ENCODE measurements at regions of chr22 and their contacts with region 1.

Region 1: DNA sequence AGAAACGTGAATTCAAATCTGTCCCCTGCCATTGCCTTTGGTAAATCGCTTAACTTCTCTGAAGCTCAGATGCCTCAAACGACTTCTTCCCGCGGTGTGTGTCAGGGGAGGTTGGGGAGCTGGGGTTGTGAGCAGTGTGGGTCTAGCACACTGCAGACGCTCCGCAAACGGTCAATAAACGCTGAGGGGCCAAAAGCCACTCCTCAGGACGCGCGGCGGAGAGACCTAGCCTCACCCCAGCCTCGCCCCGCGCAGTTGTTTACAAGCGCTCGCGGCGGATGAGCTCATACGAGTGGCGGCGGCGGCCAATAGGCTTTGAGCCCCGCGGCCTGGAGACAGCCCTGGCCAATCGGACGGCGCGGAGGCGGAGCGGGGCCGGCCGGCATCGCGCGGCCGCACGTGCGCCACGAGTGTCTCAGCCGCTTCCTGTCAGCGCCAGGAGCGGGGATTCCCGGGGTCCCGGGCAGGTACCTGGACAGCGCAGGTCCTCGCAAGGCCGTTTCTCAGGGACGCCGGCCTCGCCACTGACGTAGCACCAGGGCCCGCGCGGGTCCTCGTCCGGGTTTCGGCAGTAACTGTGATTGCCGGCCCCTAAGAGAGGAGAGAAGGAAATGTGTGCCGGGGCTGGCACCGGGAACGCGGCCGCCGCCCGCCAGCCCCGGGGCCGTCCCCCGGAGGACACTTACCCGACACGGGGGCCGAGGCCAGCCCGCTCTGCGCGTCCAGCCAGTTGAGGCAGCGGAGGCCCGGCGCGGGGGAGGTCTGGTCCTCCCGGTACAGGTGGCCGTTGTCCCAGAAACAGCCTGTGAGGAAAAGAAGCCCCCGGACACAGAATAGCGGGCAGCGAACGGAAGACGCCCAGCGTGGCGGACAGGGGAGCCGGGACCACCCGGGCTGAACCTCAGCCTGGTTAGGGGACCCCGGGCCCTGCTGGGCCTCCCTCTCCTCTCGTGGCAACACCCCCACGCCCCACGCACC is 1.5 kb downstream of the PIK3IP1 start:
- DNase-seq: peak; percentile 97
- ATAC-seq: peak; percentile 88
- H3K4me3 ChIP-seq: peak overlapping the region; percentile 72 to 99 (median 95)
- H3K4me3 Mint-ChIP-seq: peak overlapping the region; percentile 97
- H3K27ac ChIP-seq: peak overlapping the region; percentile 99 to 100
- H3K27ac Mint-ChIP-seq: peak overlapping the region; percentile 100
- H3K4me1 ChIP-seq: peaks cover 68 to 76% of the 10 kb centered on the region in 2 donors
- H3K4me1 Mint-ChIP-seq: peaks cover 67% of the 10 kb centered on the region
- H3K27me3 ChIP-seq: no peaks in the 10 kb centered on the region
- H3K27me3 Mint-ChIP-seq: no peaks in the 10 kb centered on the region
- CTCF ChIP-seq: no peak

Region 2: GRCh38 chr22:30591588-30592359 is 699.0 kb before region 1 on chr22 and contains the start of gene PES1:
- CTCF ChIA-PET with region 1: no interaction called
- POLR2A ChIA-PET with region 1: no interaction called
- intact Hi-C with region 1: loop called (anchors 5 kb)
- DNase-seq: peak; percentile 99
- ATAC-seq: peak; percentile 94
- H3K4me3 ChIP-seq: peak within 1 kb of the TSS; percentile 81 to 95 (median 91)
- H3K4me3 Mint-ChIP-seq: no peak within 1 kb of the TSS
- H3K27ac ChIP-seq: peak within 1 kb of the TSS; percentile 95 to 98
- H3K27ac Mint-ChIP-seq: no peak within 1 kb of the TSS
- H3K4me1 ChIP-seq: peaks cover 14 to 22% of the 10 kb centered on the region in 2 donors
- H3K4me1 Mint-ChIP-seq: no peaks in the 10 kb centered on the region
- H3K27me3 ChIP-seq: peaks cover 0 to 2% (median under 1%) of the 10 kb centered on the region in 4 experiments
- H3K27me3 Mint-ChIP-seq: peaks cover 3% of the 10 kb centered on the region
- CTCF ChIP-seq: no peak
- total RNA-seq, gene PES1: 72.7 and 75.2 TPM in 2 replicates

Region 3: DNA sequence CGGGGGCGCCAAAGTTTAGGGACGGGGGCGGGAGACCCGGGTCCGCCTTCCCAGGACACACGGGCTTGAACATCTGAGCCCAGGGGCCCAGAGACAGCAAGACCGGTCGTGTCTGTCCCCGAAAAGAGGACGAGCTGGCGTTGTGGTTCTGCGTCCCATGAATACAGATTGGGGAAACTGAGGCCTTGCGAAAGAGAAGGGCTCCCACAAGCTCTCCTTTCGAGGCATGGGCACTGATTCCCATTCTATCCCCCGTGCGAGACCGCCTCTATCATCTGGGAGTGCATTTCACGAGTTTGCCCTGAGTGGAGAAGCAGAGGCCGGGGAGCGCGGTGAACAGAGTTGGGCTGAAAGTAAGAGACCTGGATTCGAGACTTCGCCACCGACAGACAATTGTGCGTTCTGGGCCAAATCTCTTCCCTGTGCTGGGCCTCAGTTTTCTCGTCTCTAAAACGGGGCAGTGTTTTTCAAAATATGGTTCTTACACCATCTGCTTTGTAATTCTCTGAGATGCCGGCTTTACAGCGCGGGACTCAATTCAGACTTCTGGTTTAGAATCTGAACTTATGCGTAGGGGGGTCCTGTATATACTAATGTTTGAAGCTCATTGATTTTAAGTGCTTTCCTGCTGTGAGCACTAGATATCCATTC is 130.3 kb before region 1 on chr22:
- CTCF ChIA-PET with region 1: no interaction called
- POLR2A ChIA-PET with region 1: interaction called, 7 read pairs
- intact Hi-C with region 1: loop called (anchors 5 kb)
- DNase-seq: no peak
- ATAC-seq: peak; percentile 29
- H3K4me3 ChIP-seq: peak overlapping the region; percentile 65 to 81 (median 74)
- H3K4me3 Mint-ChIP-seq: peak overlapping the region; percentile 95
- H3K27ac ChIP-seq: peak overlapping the region; percentile 82 to 83
- H3K27ac Mint-ChIP-seq: peak overlapping the region; percentile 95
- H3K4me1 ChIP-seq: peaks cover 19 to 24% of the 10 kb centered on the region in 2 donors
- H3K4me1 Mint-ChIP-seq: peaks cover 33% of the 10 kb centered on the region
- H3K27me3 ChIP-seq: peaks cover 0 to 2% (median 0%) of the 10 kb centered on the region in 4 experiments
- H3K27me3 Mint-ChIP-seq: no peaks in the 10 kb centered on the region
- CTCF ChIP-seq: no peak

Region 4: DNA sequence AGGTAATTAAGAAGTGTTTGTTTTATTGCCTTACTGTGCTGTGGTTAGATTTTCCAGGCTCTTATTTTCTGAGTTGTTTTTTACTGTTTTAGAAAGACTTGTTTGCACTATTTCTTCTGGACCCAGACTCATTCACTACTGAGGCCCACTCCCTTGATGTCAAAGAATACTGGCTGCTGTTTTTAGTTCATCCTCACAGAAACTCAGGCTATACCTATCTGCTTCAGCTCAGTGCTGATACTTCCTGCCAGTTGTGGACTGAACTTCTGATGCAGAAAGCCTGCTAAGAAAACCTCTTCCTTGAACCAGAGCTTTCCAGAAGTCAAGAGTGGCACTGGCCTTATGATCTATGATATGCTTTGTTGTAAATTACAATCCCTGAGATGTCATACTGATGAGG is 17.4 kb after region 1 on chr22:
- CTCF ChIA-PET with region 1: interaction called, 208 read pairs
- POLR2A ChIA-PET with region 1: interaction called, 11 read pairs
- intact Hi-C with region 1: loop called (anchors 1 kb)
- DNase-seq: no peak
- ATAC-seq: peak; percentile 47
- H3K4me3 ChIP-seq: no peak overlapping the region
- H3K4me3 Mint-ChIP-seq: peak overlapping the region; percentile 66
- H3K27ac ChIP-seq: peak overlapping the region; percentile 9 to 20
- H3K27ac Mint-ChIP-seq: peak overlapping the region; percentile 79
- H3K4me1 ChIP-seq: peaks cover 9 to 10% of the 10 kb centered on the region in 2 donors
- H3K4me1 Mint-ChIP-seq: peaks cover 29% of the 10 kb centered on the region
- H3K27me3 ChIP-seq: no peaks in the 10 kb centered on the region
- H3K27me3 Mint-ChIP-seq: no peaks in the 10 kb centered on the region
- CTCF ChIP-seq: no peak

Region 5: DNA sequence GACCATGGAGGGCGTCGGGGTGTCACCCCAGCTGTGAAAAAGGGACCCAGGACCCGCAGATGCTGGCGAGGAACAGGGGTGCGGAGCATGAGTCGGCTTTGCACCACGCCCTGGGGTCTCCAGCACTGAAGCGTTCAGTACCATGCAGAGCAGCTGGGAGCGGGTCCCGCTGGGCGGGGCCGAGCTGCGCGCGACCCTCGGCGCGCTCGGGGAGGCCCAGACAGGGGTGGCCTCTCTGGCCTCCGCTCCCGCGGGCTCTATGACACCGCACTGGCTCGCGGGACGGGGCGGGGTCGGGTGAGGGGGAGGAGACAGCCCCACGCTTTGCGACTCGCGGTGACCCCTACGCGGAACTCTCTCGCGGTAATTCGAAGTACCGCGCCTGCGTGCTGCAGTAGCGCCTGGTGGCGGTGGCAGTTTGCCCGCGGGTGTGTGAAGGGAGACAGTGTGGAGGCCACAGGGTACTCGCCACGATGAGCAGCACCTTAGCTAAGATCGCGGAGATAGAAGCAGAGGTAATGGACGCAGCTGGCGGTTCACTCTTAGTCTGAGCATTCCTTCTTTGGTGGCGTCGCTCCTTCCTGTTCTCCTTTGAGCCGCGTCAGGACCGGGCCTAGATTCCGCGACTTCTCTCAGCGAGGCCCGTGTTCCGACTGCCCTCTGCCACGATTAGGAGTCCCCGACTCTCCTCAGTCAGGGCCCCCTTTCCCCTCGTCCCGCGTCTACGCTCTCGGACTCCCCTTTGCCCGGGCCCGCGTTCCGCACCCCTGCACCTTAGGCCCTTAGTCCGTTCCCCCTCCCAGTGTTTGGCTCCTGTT is 108.6 kb after region 1 on chr22 and contains the start of gene DRG1:
- CTCF ChIA-PET with region 1: no interaction called
- POLR2A ChIA-PET with region 1: interaction called, 4 read pairs
- intact Hi-C with region 1: loop called (anchors 1 kb)
- DNase-seq: peak; percentile 95
- ATAC-seq: peak; percentile 99
- H3K4me3 ChIP-seq: peak within 1 kb of the TSS; percentile 79 to 88 (median 85)
- H3K4me3 Mint-ChIP-seq: peak within 1 kb of the TSS; percentile 98
- H3K27ac ChIP-seq: peak within 1 kb of the TSS; percentile 60 to 89
- H3K27ac Mint-ChIP-seq: peak within 1 kb of the TSS; percentile 95
- H3K4me1 ChIP-seq: peaks cover 13 to 17% of the 10 kb centered on the region in 2 donors
- H3K4me1 Mint-ChIP-seq: peaks cover 21% of the 10 kb centered on the region
- H3K27me3 ChIP-seq: no peaks in the 10 kb centered on the region
- H3K27me3 Mint-ChIP-seq: peaks cover 2% of the 10 kb centered on the region
- CTCF ChIP-seq: no peak
- total RNA-seq, gene DRG1: 58.9 and 77.7 TPM in 2 replicates